ENCODE measurements at regions of chr17 and their contacts with region 1.

Region 1: DNA sequence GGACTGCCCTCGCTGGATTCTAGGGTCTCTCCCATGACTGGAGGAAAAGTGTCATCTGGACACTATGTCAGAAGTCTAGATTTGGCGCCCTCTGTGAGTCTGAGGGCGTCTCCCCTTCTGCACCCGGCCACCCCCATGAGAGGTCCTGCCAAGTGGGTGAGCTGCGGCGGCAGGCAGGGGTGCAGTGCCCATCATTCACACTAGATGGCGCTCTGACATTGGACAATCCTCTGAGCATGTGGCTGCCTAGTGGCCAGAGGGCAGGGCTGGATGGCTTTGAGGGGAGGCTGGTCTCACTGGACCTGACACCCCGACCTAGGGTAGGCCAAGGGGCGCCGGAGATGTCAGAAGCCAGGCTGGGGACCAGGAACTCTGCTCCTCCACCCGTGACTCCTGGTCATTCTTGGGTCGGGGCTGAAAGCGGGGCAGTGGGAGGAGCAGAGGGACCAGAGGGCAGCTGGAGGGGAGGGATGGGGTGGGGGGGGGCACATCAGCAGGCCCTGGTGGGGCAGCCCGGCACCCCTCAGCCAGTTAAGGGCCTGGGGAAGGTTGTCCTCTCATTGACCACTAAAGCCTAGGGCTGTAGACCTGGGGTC is 28.0 kb downstream of the MRM1 start:
- DNase-seq: peak; percentile 64 to 86 (median 74)
- ATAC-seq: peak; percentile 87
- H3K4me3 ChIP-seq: no peak overlapping the region
- H3K4me3 Mint-ChIP-seq: no peak overlapping the region
- H3K27ac ChIP-seq: no peak overlapping the region
- H3K27ac Mint-ChIP-seq: no peak overlapping the region
- H3K4me1 ChIP-seq: peaks cover 3% of the 10 kb centered on the region
- H3K4me1 Mint-ChIP-seq: peaks cover 3% of the 10 kb centered on the region
- H3K27me3 ChIP-seq: peaks cover 4 to 16% of the 10 kb centered on the region in 2 experiments
- H3K27me3 Mint-ChIP-seq: peaks cover 18% of the 10 kb centered on the region
- CTCF ChIP-seq: peak; percentile 98

Region 2: GRCh38 chr17:36657763-36658490 is 28.6 kb after region 1 on chr17:
- CTCF ChIA-PET with region 1: no interaction called
- POLR2A ChIA-PET with region 1: no interaction called
- intact Hi-C with region 1: no loop called
- DNase-seq: peak in 4 of 14 experiments; percentile 3 to 20 (median 6)
- ATAC-seq: no peak
- H3K4me3 ChIP-seq: peak overlapping the region; percentile 14
- H3K4me3 Mint-ChIP-seq: peak overlapping the region; percentile 55
- H3K27ac ChIP-seq: no peak overlapping the region
- H3K27ac Mint-ChIP-seq: no peak overlapping the region
- H3K4me1 ChIP-seq: peaks cover 12% of the 10 kb centered on the region
- H3K4me1 Mint-ChIP-seq: peaks cover 6% of the 10 kb centered on the region
- H3K27me3 ChIP-seq: peaks cover 22 to 35% of the 10 kb centered on the region in 2 experiments
- H3K27me3 Mint-ChIP-seq: peaks cover 76% of the 10 kb centered on the region
- CTCF ChIP-seq: no peak

Region 3: DNA sequence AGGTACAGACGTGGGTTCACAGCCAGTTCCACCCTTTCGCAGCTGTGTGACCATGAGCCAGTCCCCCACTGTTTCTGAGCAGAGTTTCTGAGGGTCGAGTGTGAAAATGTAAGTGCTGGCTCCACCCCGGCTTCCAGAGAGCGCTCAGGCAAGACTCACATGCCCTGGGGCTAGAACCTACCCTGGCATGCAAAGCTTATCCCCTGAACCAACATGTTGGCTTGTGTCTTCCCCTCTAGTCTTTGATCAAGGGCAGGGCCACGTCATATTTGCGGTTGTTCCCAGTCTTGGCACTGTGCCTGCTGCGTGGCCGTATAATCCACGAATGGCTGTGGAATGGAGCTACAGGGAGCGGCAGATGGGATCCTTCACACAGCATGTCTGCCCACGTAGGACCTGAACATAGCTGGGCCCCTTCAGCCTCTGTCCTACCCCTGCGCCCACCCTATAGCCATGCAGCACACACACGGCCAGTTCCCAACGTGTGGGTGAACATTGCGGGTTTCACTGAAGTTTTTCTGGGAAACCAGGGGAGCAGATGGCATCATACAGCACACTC is 56.8 kb after region 1 on chr17:
- CTCF ChIA-PET with region 1: no interaction called
- POLR2A ChIA-PET with region 1: no interaction called
- intact Hi-C with region 1: no loop called
- DNase-seq: no peak
- ATAC-seq: no peak
- H3K4me3 ChIP-seq: no peak overlapping the region
- H3K4me3 Mint-ChIP-seq: no peak overlapping the region
- H3K27ac ChIP-seq: no peak overlapping the region
- H3K27ac Mint-ChIP-seq: no peak overlapping the region
- H3K4me1 ChIP-seq: no peaks in the 10 kb centered on the region
- H3K4me1 Mint-ChIP-seq: no peaks in the 10 kb centered on the region
- H3K27me3 ChIP-seq: no peaks in the 10 kb centered on the region
- H3K27me3 Mint-ChIP-seq: peaks cover 11% of the 10 kb centered on the region
- CTCF ChIP-seq: no peak

Region 4: DNA sequence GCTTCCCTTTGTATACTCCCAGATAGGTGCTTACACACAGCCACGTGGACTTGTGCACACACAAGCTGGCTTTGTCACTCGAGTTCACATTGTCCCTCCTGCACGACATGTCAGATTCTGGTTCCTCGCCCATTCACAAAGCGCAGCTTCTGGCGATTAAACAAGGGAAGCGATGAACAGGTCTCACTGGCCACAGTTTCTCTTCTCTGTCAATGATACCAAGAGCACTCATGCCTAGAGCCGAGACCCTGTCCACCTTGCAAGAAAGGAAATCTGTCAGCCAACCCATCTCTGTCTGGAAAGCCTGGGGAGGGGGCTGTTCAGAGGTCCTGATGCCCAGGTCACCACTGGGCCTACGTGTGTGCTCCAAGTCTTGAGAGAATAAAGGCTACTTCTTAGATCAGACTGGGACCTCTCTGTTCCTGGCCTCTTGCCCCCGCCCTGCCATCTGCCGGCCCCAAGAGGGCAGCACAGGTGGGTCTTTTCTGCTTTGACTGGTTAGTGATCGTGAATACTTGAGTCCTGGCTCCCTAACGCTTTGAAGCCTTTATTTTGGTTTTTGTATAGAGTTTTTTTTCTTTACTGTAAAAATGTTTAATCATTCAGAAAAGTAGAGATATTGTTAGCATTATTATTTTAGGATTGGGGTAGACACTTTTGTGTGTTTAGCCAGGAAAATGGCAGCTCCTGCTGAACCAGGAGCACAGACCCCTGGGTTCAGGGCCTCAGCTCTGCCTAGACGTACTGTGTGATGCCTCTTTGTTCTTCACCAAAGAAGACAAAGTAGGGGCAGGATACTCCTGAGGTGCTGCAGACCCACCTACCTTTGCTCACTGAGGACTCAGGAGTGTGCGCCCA is 76.8 kb after region 1 on chr17:
- CTCF ChIA-PET with region 1: no interaction called
- POLR2A ChIA-PET with region 1: no interaction called
- intact Hi-C with region 1: loop called (anchors 2 kb)
- DNase-seq: peak in 12 of 14 experiments; percentile 25 to 68 (median 38)
- ATAC-seq: peak; percentile 74
- H3K4me3 ChIP-seq: no peak overlapping the region
- H3K4me3 Mint-ChIP-seq: no peak overlapping the region
- H3K27ac ChIP-seq: no peak overlapping the region
- H3K27ac Mint-ChIP-seq: no peak overlapping the region
- H3K4me1 ChIP-seq: peaks cover 6% of the 10 kb centered on the region
- H3K4me1 Mint-ChIP-seq: no peaks in the 10 kb centered on the region
- H3K27me3 ChIP-seq: peaks cover 31 to 36% of the 10 kb centered on the region in 2 experiments
- H3K27me3 Mint-ChIP-seq: peaks cover 45% of the 10 kb centered on the region
- CTCF ChIP-seq: peak; percentile 75

Region 5: GRCh38 chr17:36755586-36755985 is 126.2 kb after region 1 on chr17:
- CTCF ChIA-PET with region 1: interaction called, 5 read pairs
- POLR2A ChIA-PET with region 1: no interaction called
- intact Hi-C with region 1: loop called (anchors 1 to 2 kb)
- DNase-seq: peak in 13 of 14 experiments; percentile 9 to 60 (median 17)
- ATAC-seq: peak; percentile 29
- H3K4me3 ChIP-seq: no peak overlapping the region
- H3K4me3 Mint-ChIP-seq: no peak overlapping the region
- H3K27ac ChIP-seq: no peak overlapping the region
- H3K27ac Mint-ChIP-seq: no peak overlapping the region
- H3K4me1 ChIP-seq: peaks cover 3% of the 10 kb centered on the region
- H3K4me1 Mint-ChIP-seq: no peaks in the 10 kb centered on the region
- H3K27me3 ChIP-seq: no peaks in the 10 kb centered on the region
- H3K27me3 Mint-ChIP-seq: peaks cover 6% of the 10 kb centered on the region
- CTCF ChIP-seq: peak; percentile 53

Region 6: GRCh38 chr17:37047631-37048104 is 418.3 kb after region 1 on chr17:
- CTCF ChIA-PET with region 1: interaction called, 13 read pairs
- POLR2A ChIA-PET with region 1: no interaction called
- intact Hi-C with region 1: loop called (anchors 1 kb)
- DNase-seq: peak; percentile 63 to 85 (median 76)
- ATAC-seq: peak; percentile 89
- H3K4me3 ChIP-seq: no peak overlapping the region
- H3K4me3 Mint-ChIP-seq: no peak overlapping the region
- H3K27ac ChIP-seq: no peak overlapping the region
- H3K27ac Mint-ChIP-seq: peak overlapping the region; percentile 16
- H3K4me1 ChIP-seq: peaks cover 5% of the 10 kb centered on the region
- H3K4me1 Mint-ChIP-seq: peaks cover 13% of the 10 kb centered on the region
- H3K27me3 ChIP-seq: no peaks in the 10 kb centered on the region
- H3K27me3 Mint-ChIP-seq: no peaks in the 10 kb centered on the region
- CTCF ChIP-seq: peak; percentile 88

Region 7: DNA sequence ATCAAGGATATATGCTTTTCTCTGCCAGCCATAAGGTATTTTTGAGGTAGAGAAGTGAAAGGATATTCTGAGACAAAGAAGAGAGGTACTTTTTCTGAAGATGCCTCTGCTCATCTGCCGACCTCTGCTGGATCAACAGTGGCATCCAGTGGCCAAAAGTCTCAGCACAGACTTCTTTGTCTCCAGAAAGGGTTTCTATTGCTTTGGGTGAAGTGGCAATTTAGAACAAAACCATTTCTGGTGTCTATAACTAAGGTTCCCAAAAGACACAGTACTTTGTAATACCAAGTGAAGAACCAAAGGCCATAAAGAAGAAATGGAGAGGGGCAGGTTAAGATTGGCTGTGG is 591.2 kb after region 1 on chr17:
- CTCF ChIA-PET with region 1: interaction called, 3 read pairs
- POLR2A ChIA-PET with region 1: no interaction called
- intact Hi-C with region 1: loop called in 1 of 2 experiments (anchors 1 kb)
- DNase-seq: peak in 9 of 14 experiments; percentile 1 to 45 (median 11)
- ATAC-seq: no peak
- H3K4me3 ChIP-seq: no peak overlapping the region
- H3K4me3 Mint-ChIP-seq: no peak overlapping the region
- H3K27ac ChIP-seq: no peak overlapping the region
- H3K27ac Mint-ChIP-seq: no peak overlapping the region
- H3K4me1 ChIP-seq: no peaks in the 10 kb centered on the region
- H3K4me1 Mint-ChIP-seq: no peaks in the 10 kb centered on the region
- H3K27me3 ChIP-seq: no peaks in the 10 kb centered on the region
- H3K27me3 Mint-ChIP-seq: no peaks in the 10 kb centered on the region
- CTCF ChIP-seq: no peak

Region 8: DNA sequence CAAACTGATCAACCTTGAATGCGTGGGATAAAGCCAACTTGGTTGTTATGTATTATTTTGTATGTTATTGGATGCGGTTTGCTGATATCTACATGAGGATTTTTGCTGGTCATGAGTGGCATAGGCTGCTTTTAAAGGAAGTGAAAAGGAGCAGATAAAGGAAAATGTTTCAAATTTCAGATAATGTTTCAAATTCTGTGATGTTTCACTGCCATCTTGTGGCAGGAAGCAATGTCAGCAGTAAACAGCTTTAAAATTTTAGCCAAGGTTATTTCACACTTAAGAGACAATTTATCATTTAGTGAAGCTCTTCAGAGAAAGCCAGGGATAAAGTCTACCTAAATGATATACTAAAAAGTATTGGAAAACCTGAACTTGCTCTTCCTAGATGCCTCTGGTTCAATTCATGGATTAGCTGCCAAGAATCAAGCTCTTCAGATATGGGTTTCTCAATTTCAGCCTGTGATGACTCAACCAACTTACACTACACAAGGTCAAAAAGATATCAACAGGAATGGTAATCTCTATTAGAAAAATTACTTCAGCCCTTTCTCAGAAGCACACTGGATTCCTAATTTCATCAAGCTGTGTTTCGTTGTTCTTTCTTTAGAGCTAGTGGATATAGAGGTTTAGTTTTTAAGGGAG is 610.5 kb after region 1 on chr17:
- CTCF ChIA-PET with region 1: interaction called, 4 read pairs
- POLR2A ChIA-PET with region 1: no interaction called
- intact Hi-C with region 1: loop called (anchors 1 kb)
- DNase-seq: peak in 3 of 14 experiments; percentile 21 to 44 (median 31)
- ATAC-seq: no peak
- H3K4me3 ChIP-seq: no peak overlapping the region
- H3K4me3 Mint-ChIP-seq: no peak overlapping the region
- H3K27ac ChIP-seq: no peak overlapping the region
- H3K27ac Mint-ChIP-seq: no peak overlapping the region
- H3K4me1 ChIP-seq: no peaks in the 10 kb centered on the region
- H3K4me1 Mint-ChIP-seq: no peaks in the 10 kb centered on the region
- H3K27me3 ChIP-seq: no peaks in the 10 kb centered on the region
- H3K27me3 Mint-ChIP-seq: no peaks in the 10 kb centered on the region
- CTCF ChIP-seq: peak; percentile 63

Measured in CD4-positive, alpha-beta T cell (primary cell).